B cell (primary cell): ENCODE measurements at regions of chr15 and their contacts with region 1.

Region 1: DNA sequence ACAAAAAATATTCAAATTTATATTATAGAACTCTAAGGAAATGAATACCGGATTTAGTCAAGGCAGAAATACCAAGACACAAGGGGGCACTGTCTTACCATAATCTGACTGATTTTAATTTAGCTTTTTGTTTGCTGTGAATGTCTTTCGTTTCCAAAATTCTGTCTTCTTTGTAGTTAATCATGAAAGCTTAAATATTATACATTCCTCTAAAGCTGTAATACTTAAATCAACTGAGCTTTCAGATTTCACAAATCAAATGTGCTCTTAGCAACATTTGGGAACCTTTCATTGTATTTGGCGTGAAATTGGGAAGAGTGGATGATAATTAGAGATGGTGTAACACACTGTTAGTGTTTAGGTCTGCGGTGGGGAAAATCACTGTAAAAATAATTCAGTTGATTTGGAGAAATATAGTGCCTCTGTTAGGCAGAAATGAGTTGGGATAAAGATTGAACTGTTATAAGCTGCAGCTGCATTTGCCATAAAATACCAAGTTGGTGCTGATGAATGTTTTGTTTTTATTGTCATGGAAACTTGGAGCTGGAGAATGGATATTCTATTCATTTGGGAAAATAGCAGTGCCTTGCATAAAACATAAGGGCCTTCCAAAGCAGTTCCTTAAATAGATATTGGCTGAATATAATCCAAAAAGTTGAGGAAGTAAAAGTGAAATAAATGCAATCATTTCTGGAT is 228.2 kb downstream of the TCF12 start:
- DNase-seq: peak; percentile 73
- ATAC-seq: no peak
- H3K4me3 ChIP-seq: no peak overlapping the region
- H3K4me3 Mint-ChIP-seq: peak overlapping the region; percentile 57
- H3K27ac ChIP-seq: no peak overlapping the region
- H3K27ac Mint-ChIP-seq: no peak overlapping the region
- H3K4me1 ChIP-seq: peaks cover 12 to 15% of the 10 kb centered on the region in 2 donors
- H3K4me1 Mint-ChIP-seq: peaks cover 11% of the 10 kb centered on the region
- H3K27me3 ChIP-seq: no peaks in the 10 kb centered on the region
- H3K27me3 Mint-ChIP-seq: no peaks in the 10 kb centered on the region
- CTCF ChIP-seq: peak; percentile 96

Region 2: DNA sequence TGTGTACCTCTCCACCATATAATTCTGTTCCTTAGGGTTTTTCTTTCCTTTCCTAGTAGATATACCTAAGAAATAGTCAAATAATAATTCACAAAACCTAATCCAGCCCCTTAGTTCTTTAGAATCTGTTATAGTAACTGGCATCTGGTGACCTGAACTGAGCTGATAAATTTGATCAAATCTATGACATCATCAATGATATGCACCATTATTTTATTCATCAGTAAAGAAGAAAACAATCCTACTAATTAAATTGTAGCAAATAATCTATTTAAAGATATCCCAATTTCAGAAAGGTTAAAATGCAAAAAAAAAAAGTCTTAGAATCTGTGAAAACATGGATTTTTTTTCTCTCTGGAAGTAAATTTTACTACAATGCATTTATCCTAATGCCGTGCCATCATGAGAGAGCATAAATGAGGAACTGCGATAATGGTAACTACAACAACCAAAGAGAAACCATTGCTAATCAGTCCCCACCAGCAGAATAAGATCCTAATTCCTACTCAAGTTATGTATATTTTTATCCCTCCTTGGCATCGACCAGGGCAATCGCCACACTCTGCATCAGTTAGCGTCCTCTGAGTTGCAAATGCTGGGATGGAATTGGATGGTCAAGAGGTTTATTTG is 675.1 kb before region 1 on chr15:
- CTCF ChIA-PET with region 1: no interaction called
- POLR2A ChIA-PET with region 1: no interaction called
- intact Hi-C with region 1: no loop called
- DNase-seq: no peak
- ATAC-seq: no peak
- H3K4me3 ChIP-seq: no peak overlapping the region
- H3K4me3 Mint-ChIP-seq: no peak overlapping the region
- H3K27ac ChIP-seq: no peak overlapping the region
- H3K27ac Mint-ChIP-seq: no peak overlapping the region
- H3K4me1 ChIP-seq: peaks cover 0 to 2% of the 10 kb centered on the region in 2 donors
- H3K4me1 Mint-ChIP-seq: peaks cover 8% of the 10 kb centered on the region
- H3K27me3 ChIP-seq: no peaks in the 10 kb centered on the region
- H3K27me3 Mint-ChIP-seq: no peaks in the 10 kb centered on the region
- CTCF ChIP-seq: no peak

Region 3: GRCh38 chr15:56496635-56497034 is 650.0 kb before region 1 on chr15:
- CTCF ChIA-PET with region 1: interaction called, 14 read pairs
- POLR2A ChIA-PET with region 1: no interaction called
- intact Hi-C with region 1: no loop called
- DNase-seq: peak; percentile 69
- ATAC-seq: peak; percentile 63
- H3K4me3 ChIP-seq: no peak overlapping the region
- H3K4me3 Mint-ChIP-seq: peak overlapping the region; percentile 24
- H3K27ac ChIP-seq: no peak overlapping the region
- H3K27ac Mint-ChIP-seq: no peak overlapping the region
- H3K4me1 ChIP-seq: peaks cover 0 to 3% of the 10 kb centered on the region in 2 donors
- H3K4me1 Mint-ChIP-seq: peaks cover 3% of the 10 kb centered on the region
- H3K27me3 ChIP-seq: no peaks in the 10 kb centered on the region
- H3K27me3 Mint-ChIP-seq: no peaks in the 10 kb centered on the region
- CTCF ChIP-seq: peak; percentile 84

Region 4: DNA sequence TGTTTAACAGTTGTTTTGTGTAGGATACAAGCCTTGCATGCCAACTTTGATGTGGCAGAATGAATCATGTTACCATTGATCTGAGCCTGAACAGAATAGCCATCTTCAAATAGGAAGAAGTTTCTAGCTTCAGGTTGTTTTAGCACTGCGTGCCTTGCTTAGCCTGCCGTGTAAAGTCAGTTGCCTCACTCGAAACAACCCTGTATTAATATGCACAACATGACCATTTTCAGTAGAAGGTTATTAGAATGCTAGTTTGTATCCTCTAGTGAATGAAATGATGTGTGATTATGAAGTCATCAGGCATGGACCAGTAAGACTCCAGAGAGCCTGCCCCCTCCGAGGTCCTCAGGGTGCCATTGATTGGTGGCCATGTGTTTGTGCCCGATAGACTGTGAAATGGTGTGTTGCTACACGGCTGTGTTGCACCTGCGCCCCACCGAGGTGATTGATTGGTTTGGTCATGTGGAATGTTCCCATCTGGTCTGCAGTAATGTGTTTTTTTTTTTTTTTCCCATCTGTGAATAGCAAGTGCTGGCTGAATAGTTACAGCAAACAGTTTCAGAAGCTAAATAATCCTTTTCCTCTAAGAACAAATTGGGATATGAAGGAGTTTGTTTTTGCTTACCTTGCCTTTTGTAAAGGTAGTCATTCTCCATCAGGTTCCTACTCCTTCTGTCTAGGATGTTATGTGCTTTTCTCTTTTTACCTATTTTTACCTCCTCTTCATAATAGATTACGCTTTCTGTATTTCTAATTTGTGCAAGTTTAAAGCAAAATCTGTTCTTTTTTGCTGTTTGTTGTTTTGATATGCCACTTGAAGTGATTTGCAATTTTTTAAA is 13.3 kb before region 1 on chr15:
- CTCF ChIA-PET with region 1: interaction called, 19 read pairs
- POLR2A ChIA-PET with region 1: interaction called, 3 read pairs
- intact Hi-C with region 1: no loop called
- DNase-seq: peak; percentile 43
- ATAC-seq: peak; percentile 49
- H3K4me3 ChIP-seq: no peak overlapping the region
- H3K4me3 Mint-ChIP-seq: peak overlapping the region; percentile 55
- H3K27ac ChIP-seq: no peak overlapping the region
- H3K27ac Mint-ChIP-seq: no peak overlapping the region
- H3K4me1 ChIP-seq: peaks cover 6 to 14% of the 10 kb centered on the region in 2 donors
- H3K4me1 Mint-ChIP-seq: peaks cover 36% of the 10 kb centered on the region
- H3K27me3 ChIP-seq: no peaks in the 10 kb centered on the region
- H3K27me3 Mint-ChIP-seq: no peaks in the 10 kb centered on the region
- CTCF ChIP-seq: no peak

Region 5: DNA sequence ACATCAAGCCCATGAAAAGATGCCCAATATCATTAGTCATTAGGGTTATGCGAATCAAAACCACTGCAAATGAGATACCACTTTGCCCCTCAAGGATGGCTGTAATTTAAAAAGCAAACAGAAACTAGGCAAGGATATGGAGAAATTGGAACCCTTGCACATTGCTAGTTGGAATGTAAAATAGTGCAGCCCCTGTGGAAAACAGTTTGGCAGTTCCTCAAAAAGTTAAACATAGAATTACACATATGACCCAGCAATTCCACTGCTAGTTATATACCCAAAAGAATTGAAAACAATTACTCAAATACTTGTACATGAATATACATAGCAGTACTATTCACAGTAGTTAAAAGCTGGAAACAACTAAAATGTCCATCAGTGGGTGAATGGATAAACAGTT is 42.8 kb after region 1 on chr15:
- CTCF ChIA-PET with region 1: interaction called, 16 read pairs
- POLR2A ChIA-PET with region 1: no interaction called
- intact Hi-C with region 1: no loop called
- DNase-seq: no peak
- ATAC-seq: no peak
- H3K4me3 ChIP-seq: no peak overlapping the region
- H3K4me3 Mint-ChIP-seq: no peak overlapping the region
- H3K27ac ChIP-seq: no peak overlapping the region
- H3K27ac Mint-ChIP-seq: no peak overlapping the region
- H3K4me1 ChIP-seq: no peaks in the 10 kb centered on the region
- H3K4me1 Mint-ChIP-seq: no peaks in the 10 kb centered on the region
- H3K27me3 ChIP-seq: no peaks in the 10 kb centered on the region
- H3K27me3 Mint-ChIP-seq: no peaks in the 10 kb centered on the region
- CTCF ChIP-seq: no peak

Region 6: GRCh38 chr15:57218826-57219576 is 72.3 kb after region 1 on chr15:
- CTCF ChIA-PET with region 1: interaction called, 43 read pairs
- POLR2A ChIA-PET with region 1: no interaction called
- intact Hi-C with region 1: no loop called
- DNase-seq: peak; percentile 48
- ATAC-seq: no peak
- H3K4me3 ChIP-seq: peak overlapping the region in 1 of 5 experiments; percentile 20
- H3K4me3 Mint-ChIP-seq: peak overlapping the region; percentile 77
- H3K27ac ChIP-seq: no peak overlapping the region
- H3K27ac Mint-ChIP-seq: no peak overlapping the region
- H3K4me1 ChIP-seq: peaks cover 12 to 18% of the 10 kb centered on the region in 2 donors
- H3K4me1 Mint-ChIP-seq: peaks cover 40% of the 10 kb centered on the region
- H3K27me3 ChIP-seq: no peaks in the 10 kb centered on the region
- H3K27me3 Mint-ChIP-seq: no peaks in the 10 kb centered on the region
- CTCF ChIP-seq: no peak

Region 7: DNA sequence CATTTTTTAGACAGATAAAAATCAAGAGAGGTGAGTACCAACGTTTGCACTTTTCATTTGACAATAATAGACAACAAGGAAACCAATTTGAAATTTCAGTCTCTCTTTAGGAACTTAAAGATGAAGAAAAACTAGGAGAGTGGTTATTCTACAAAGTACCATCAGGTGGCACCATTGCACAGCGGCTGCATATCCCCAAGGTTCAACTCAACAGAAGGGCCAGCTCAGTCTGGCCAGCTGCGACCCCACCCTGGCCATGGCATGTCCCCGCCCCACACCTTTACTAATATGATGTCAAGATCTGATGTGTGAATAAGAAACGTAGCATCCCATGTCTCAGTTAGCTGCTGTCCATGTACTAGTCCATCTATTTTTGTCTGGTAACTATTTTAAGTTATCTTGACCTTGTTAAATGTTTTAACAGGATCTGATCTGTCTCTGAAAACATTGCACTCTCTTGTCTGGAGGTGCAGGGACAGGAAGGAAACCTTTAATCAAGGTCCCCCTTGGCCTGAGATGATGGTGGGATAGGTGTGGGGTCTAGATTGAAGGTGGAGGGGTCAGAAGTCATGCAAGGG is 194.1 kb after region 1 on chr15:
- CTCF ChIA-PET with region 1: interaction called, 54 read pairs
- POLR2A ChIA-PET with region 1: no interaction called
- intact Hi-C with region 1: loop called (anchors 1 kb)
- DNase-seq: peak; percentile 70
- ATAC-seq: peak; percentile 67
- H3K4me3 ChIP-seq: no peak overlapping the region
- H3K4me3 Mint-ChIP-seq: no peak overlapping the region
- H3K27ac ChIP-seq: no peak overlapping the region
- H3K27ac Mint-ChIP-seq: no peak overlapping the region
- H3K4me1 ChIP-seq: no peaks in the 10 kb centered on the region
- H3K4me1 Mint-ChIP-seq: no peaks in the 10 kb centered on the region
- H3K27me3 ChIP-seq: no peaks in the 10 kb centered on the region
- H3K27me3 Mint-ChIP-seq: peaks cover 12% of the 10 kb centered on the region
- CTCF ChIP-seq: peak; percentile 96

Region 8: GRCh38 chr15:57541805-57542504 is 395.3 kb after region 1 on chr15:
- CTCF ChIA-PET with region 1: interaction called, 34 read pairs
- POLR2A ChIA-PET with region 1: no interaction called
- intact Hi-C with region 1: no loop called
- DNase-seq: peak; percentile 58
- ATAC-seq: no peak
- H3K4me3 ChIP-seq: no peak overlapping the region
- H3K4me3 Mint-ChIP-seq: no peak overlapping the region
- H3K27ac ChIP-seq: no peak overlapping the region
- H3K27ac Mint-ChIP-seq: no peak overlapping the region
- H3K4me1 ChIP-seq: no peaks in the 10 kb centered on the region
- H3K4me1 Mint-ChIP-seq: no peaks in the 10 kb centered on the region
- H3K27me3 ChIP-seq: peaks cover 0 to 5% (median 0%) of the 10 kb centered on the region in 4 experiments
- H3K27me3 Mint-ChIP-seq: peaks cover 41% of the 10 kb centered on the region
- CTCF ChIP-seq: peak; percentile 79